Sigmoid colon (tissue), 7 donors: ENCODE measurements at regions of chr6 and their contacts with region 1.

Region 1: DNA sequence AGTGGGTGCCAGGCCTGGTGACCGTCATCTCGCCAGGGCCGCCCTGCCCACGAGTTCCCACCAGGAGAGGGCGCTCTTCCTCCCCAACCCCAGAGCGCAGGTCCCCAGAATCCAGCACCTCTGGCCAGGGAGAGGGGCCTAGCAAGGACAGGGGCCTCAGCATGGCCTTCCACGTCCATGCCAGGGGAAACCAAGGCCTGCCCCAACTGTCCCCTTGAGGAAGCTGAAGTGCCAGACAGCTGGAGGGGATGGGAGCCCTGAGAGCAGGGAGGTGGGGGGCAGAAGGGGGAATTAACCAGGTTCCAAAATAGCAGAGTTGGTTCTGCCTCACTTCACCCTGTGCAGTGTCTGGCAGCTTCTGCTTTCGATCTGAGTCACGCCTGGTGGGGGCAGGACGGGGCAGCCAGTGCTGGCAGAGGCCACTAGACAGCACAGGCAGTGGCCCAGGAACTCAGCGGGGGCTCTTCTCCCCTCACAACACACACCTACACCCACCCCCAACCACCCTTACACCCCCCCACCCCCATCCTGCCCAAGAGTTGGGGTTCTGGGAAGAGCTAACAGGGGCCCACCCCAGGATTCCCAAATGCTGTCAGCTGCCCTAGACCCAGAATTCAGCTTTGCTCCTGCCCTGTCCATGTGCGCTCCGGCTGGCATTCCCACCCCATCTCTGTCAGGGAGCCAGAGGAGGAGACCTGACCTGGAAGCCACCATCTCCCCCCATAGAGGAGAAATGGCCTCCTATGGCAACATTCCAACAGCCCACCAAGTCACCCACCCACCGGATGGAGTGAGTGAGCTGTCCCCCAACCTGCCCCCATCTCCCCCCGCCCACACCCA is 29.2 kb downstream of the TFEB start:
- DNase-seq: peak; percentile 93
- H3K4me3 ChIP-seq: peak overlapping the region in 1 of 4 donors; percentile 5
- H3K27ac ChIP-seq: peak overlapping the region; percentile 84 to 92 (median 88)
- H3K4me1 ChIP-seq: peaks cover 0 to 81% (median 67%) of the 10 kb centered on the region in 4 donors
- H3K27me3 ChIP-seq: no peaks in the 10 kb centered on the region
- CTCF ChIP-seq: peak; percentile 77 to 85 (median 79)
- EP300 ChIP-seq: no peak
- POLR2A ChIP-seq: no peak

Region 2: DNA sequence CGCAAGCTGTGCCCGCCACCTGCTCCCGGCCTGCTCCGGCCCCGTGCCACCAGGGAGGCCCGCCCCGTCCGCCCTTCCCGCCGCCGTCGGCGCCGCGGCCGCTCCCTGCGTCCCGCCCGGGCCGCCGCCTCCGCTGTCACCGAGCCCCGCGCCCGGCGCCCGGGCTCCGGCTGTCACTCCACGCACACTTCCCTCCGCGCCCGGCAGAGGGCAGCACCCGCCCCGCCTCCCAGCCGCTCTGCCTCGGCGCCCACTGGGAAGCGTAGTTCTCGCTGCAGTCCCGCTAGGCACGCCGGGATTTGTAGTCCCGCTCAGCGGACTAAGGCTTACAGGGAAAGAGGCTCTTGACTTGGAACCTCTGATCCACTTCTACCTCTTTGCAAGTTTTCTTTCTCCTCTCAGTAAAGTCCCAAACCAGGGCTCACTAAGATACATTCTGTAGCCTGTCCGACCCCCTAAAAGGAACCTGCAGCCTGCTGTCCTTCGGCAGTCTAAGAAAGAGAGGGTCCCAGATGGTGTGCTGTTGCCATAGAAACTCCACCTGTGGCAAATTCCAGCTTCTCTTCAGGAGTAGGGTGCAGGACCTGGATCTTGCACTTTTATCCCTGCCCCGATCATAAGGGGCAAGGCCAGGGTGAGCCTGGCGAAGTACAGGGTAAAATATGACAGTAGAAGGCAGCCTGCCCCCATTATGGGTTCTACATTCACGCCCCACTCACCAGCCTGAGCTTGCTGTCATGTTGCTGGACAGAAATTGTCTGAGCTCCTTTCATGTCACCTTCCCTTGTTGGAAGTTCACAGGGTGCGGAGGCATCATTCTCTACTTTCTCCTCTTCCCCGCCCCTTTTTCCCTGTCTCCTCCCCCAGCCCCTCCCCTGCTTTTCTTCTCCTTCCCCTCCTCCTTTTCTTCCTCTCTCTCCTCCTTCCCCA is 29.5 kb after region 1 on chr6 and contains the start of gene TFEB:
- intact Hi-C with region 1: loop called (anchors 1 kb)
- DNase-seq: peak; percentile 97
- H3K4me3 ChIP-seq: peak within 1 kb of the TSS; percentile 71 to 95 (median 88)
- H3K27ac ChIP-seq: peak within 1 kb of the TSS; percentile 96 to 98 (median 97)
- H3K4me1 ChIP-seq: peaks cover 0 to 40% (median 31%) of the 10 kb centered on the region in 4 donors
- H3K27me3 ChIP-seq: no peaks in the 10 kb centered on the region
- CTCF ChIP-seq: peak; percentile 66 to 79 (median 72)
- EP300 ChIP-seq: no peak
- POLR2A ChIP-seq: no peak
- total RNA-seq, gene TFEB: 21.0 to 28.5 (median 24.2) TPM

Region 3: DNA sequence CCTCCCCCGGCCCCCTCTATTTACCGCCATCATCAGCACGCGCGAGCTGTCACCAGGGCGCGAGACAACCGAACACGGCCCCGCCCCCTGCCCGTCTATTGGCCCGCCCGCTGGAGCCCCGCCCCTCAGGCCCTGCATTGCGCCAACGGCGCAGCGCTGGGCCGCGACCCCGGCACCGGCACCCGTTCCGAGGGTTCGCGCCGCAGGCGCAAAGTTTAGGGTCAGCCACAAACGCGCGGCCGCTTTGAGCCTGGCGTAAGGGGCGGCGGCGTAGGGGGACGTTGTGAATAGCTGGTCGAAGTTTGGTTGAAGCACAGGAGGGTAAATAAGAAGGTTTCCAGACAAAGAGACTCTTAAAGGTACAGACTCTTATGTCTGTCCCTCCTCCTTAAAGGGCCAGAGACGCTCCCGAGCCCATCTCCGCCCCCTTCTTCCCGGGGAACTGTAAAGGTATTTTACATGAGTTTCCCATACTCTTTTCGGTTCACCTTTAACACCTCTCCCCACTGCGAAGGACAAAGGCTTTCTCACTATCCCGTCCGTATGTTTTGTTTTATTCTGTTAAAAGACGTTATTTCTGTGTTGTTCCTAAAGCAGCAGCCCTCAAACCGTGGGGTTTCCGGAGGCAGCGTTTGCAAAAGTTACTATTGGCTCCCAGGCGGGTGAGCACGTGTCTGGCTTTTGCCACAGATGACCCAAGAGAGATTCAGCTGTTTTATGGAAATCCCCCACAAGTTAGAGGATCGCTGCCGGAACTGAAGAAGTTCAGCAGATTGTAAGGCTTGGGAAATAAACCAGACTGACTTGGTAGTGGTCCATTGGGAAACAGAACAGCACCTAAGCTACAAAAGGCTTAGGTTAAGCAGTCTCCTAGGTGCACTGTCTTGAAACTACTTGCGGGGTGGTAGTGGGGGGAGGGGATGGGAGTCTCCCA is 189.4 kb after region 1 on chr6 and contains the start of gene USP49:
- intact Hi-C with region 1: no loop called
- DNase-seq: peak; percentile 94
- H3K4me3 ChIP-seq: peak within 1 kb of the TSS; percentile 58 to 79 (median 75)
- H3K27ac ChIP-seq: peak within 1 kb of the TSS; percentile 81 to 89 (median 84)
- H3K4me1 ChIP-seq: peaks cover 0 to 20% (median 12%) of the 10 kb centered on the region in 4 donors
- H3K27me3 ChIP-seq: no peaks in the 10 kb centered on the region
- CTCF ChIP-seq: no peak
- EP300 ChIP-seq: no peak
- POLR2A ChIP-seq: no peak
- total RNA-seq, gene USP49: 2.1 to 10.0 (median 3.1) TPM